ENCODE measurements at regions of chr5 and their contacts with region 1.

Region 1: DNA sequence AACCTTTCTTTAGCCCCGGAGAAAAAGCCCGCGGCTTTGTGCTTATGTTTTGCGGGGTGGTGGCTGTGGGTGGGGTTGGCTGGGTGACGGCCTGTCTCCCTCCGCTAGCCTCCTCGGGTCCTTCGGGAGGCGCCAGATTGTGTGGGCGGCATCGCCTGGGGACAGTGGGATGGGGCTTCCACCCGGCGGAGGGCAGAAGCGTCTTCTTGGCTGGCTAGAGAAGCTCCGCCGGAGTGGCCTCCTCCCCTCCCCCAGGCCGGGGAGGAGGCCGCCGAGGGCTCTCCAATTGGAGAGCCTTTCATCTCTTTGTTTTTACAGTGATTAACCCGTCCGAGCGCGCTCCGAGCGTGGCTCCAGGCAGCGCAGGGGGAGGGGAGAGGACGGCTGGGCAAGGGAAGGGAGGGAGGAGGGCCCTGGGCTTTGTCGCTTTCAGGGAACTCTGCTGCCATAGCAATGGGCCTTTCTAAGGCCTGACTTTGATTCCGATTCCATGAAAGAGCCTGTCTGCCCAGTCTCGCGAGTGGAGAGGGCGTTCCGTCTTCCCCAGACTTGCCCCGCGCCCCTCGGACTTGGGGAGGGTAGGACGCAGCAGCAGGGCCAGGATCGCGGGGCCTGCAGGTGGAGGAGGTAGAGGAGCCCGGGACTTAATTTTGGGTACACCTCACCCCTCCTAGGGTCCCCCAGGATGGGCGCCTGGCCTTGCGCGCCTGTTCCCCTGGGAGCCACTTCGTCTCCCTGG is 36.7 kb upstream of the TIFAB start:
- DNase-seq: peak; percentile 62 to 84
- H3K4me3 ChIP-seq: peak overlapping the region; percentile 32 to 56 (median 46); a peak in 7 of 8 replicates
- H3K27ac ChIP-seq: no peak overlapping the region
- H3K4me1 ChIP-seq: peaks cover 4 to 47% (median 27%) of the 10 kb centered on the region in 4 experiments
- H3K27me3 ChIP-seq: peaks cover 83 to 99% (median 96%) of the 10 kb centered on the region in 4 experiments
- CTCF ChIP-seq: no peak
- EP300 ChIP-seq: no peak
- POLR2A ChIP-seq: no peak
- RAD21 ChIP-seq: no peak; a peak in 1 of 4 replicates

Region 2: GRCh38 chr5:135410348-135410747 is 78.5 kb before region 1 on chr5:
- CTCF ChIA-PET with region 1: no interaction called
- POLR2A ChIA-PET with region 1: no interaction called
- DNase-seq: no peak
- H3K4me3 ChIP-seq: no peak overlapping the region
- H3K27ac ChIP-seq: no peak overlapping the region
- H3K4me1 ChIP-seq: no peaks in the 10 kb centered on the region
- H3K27me3 ChIP-seq: no peaks in the 10 kb centered on the region
- CTCF ChIP-seq: no peak
- EP300 ChIP-seq: no peak
- POLR2A ChIP-seq: no peak
- RAD21 ChIP-seq: no peak

Region 3: DNA sequence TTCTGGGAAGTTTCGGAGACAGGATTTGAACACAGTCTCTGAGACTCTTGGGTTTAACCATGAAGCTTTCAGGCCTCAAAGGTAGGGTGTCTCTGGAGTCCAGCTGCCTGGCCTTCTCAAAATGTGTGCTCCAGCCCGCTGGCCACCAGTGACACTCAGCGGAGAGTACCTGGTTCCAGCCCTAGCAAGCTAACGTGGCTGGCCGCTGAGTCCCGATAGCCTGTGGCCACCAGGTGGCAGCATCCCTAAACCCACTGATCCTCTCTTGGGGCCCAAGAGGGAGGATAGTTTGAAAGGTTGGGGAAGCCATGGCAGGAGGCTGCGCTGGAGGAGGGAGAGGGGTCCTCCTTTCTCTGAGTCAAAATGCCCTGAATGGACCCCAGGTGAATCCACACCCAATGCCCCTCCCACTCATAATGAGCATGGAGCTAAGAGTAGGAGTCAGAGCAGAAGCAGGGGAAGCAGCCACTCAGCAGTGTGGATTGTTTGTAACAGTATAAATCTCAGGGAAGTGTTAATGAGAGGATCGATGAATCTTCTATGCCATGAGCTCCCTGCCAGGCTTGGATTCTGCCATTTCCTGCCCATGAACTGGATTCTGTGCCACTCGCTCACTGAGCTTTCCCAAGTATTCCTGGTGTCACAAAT is 31.3 kb before region 1 on chr5:
- CTCF ChIA-PET with region 1: interaction called, 137 read pairs
- POLR2A ChIA-PET with region 1: no interaction called
- DNase-seq: peak; percentile 25 to 90
- H3K4me3 ChIP-seq: no peak overlapping the region
- H3K27ac ChIP-seq: no peak overlapping the region
- H3K4me1 ChIP-seq: no peaks in the 10 kb centered on the region
- H3K27me3 ChIP-seq: peaks cover 0 to 14% (median 4%) of the 10 kb centered on the region in 4 experiments; a peak in 4 of 7 replicates
- CTCF ChIP-seq: peak; percentile 88 to 98 (median 96)
- EP300 ChIP-seq: no peak
- POLR2A ChIP-seq: no peak
- RAD21 ChIP-seq: peak; percentile 65 to 79

Region 4: GRCh38 chr5:135535820-135536801 is 47.2 kb after region 1 on chr5 and contains the start of gene NEUROG1:
- CTCF ChIA-PET with region 1: interaction called, 57 read pairs
- POLR2A ChIA-PET with region 1: interaction called, 15 read pairs
- DNase-seq: peak in 1 of 2 experiments; percentile 87
- H3K4me3 ChIP-seq: peak within 1 kb of the TSS; percentile 19 to 51 (median 28); a peak in 7 of 8 replicates
- H3K27ac ChIP-seq: no peak within 1 kb of the TSS
- H3K4me1 ChIP-seq: peaks cover 0 to 12% (median 11%) of the 10 kb centered on the region in 4 experiments; a peak in 6 of 7 replicates
- H3K27me3 ChIP-seq: peaks cover 96 to 100% (median 98%) of the 10 kb centered on the region in 4 experiments
- CTCF ChIP-seq: no peak
- EP300 ChIP-seq: peak in 1 of 2 experiments; percentile 18; a peak in 1 of 3 replicates
- POLR2A ChIP-seq: no peak
- RAD21 ChIP-seq: no peak
- total RNA-seq, gene NEUROG1: not detected in 2 replicates

Region 5: DNA sequence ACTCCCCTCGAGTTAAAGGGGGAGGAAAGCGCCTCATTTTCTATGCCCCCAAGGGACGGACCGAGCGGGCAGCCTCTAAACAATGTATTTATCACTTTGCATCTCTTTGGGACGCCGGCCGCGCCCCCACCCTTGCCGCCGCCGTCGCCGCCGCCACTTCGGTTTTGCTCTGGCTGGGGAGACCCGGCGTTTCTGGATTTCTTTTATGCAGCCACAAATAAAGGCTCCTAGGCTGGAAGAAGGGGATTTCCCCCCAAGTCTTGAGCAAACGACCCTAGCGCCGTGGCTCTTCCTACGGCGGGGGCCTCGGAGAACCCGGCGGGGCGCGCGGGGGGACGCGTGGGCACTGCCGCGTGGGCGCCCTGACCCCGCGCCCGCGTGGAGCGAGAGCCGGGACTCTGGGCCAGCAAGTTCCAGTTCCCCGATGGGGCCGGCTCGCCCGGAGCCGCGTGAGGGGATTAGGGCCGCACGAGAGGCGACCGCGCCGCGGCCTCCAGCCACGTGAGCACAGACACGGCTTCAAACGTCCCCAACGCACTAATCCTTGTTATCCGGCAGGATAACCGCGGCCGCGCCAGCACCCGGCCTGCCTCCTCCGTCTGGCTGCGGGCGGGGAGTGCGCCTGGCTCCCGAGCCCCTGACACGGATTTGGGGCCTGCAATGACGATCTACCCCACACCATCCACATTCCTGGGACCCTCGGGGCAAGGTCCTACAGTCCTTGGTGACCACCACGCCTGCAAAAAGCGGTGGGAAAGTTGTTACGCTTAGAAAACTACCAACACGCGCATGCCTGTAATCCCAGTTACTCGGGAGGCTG is 54.8 kb after region 1 on chr5:
- CTCF ChIA-PET with region 1: interaction called, 94 read pairs
- POLR2A ChIA-PET with region 1: interaction called, 4 read pairs
- DNase-seq: no peak
- H3K4me3 ChIP-seq: peak overlapping the region; percentile 4 to 50 (median 16); a peak in 6 of 8 replicates
- H3K27ac ChIP-seq: no peak overlapping the region
- H3K4me1 ChIP-seq: peaks cover 6 to 13% (median 10%) of the 10 kb centered on the region in 4 experiments; a peak in 6 of 7 replicates
- H3K27me3 ChIP-seq: peaks cover 97 to 100% (median 99%) of the 10 kb centered on the region in 4 experiments
- CTCF ChIP-seq: no peak
- EP300 ChIP-seq: no peak
- POLR2A ChIP-seq: no peak
- RAD21 ChIP-seq: no peak